ENCODE measurements at regions of chr11 and their contacts with region 1.

Region 1: GRCh38 chr11:10784232-10785145 is 24.2 kb downstream of the EIF4G2 start:
- DNase-seq: peak; percentile 26 to 52
- ATAC-seq: peak; percentile 53 to 87 (median 80)
- H3K4me3 ChIP-seq: no peak overlapping the region
- H3K27ac ChIP-seq: peak overlapping the region in 6 of 10 donors; percentile 10 to 57 (median 36)
- H3K4me1 ChIP-seq: peaks cover 6 to 43% (median 25%) of the 10 kb centered on the region in 9 donors
- H3K27me3 ChIP-seq: no peaks in the 10 kb centered on the region
- CTCF ChIP-seq: no peak

Region 2: DNA sequence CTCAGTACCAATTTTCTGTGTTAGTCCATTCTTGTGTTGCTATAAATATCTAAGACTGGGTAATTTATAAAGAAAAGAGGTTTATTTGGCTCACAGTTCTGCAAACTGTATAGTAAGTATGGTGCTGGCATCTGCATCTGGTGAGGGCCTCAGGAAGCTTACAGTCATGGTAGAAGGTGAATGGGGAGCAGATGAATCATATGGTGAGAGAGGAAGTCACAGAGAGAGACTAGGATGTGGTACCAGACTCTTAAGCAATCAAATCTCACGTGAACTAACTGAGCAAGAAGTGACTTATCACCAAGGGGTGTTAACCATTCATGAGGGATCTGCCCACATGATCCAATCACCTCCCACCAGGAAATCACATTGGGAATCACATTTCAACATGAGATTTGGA is 134.2 kb after region 1 on chr11:
- intact Hi-C with region 1: loop called in 1 of 10 experiments (anchors 10 kb)
- DNase-seq: no peak
- ATAC-seq: no peak
- H3K4me3 ChIP-seq: no peak overlapping the region
- H3K27ac ChIP-seq: no peak overlapping the region
- H3K4me1 ChIP-seq: peaks cover 0 to 8% (median 0%) of the 10 kb centered on the region in 9 donors
- H3K27me3 ChIP-seq: no peaks in the 10 kb centered on the region
- CTCF ChIP-seq: no peak